ENCODE measurements at regions of chr5 and their contacts with region 1.

Region 1: GRCh38 chr5:36875790-36876388 is 680 bp upstream of the NIPBL start:
- DNase-seq: no peak
- ATAC-seq: peak; percentile 69
- H3K4me3 ChIP-seq: peak overlapping the region; percentile 84 to 96
- H3K27ac ChIP-seq: peak overlapping the region; percentile 97
- H3K4me1 ChIP-seq: peaks cover 28% of the 10 kb centered on the region
- H3K27me3 ChIP-seq: no peaks in the 10 kb centered on the region
- CTCF ChIP-seq: peak; percentile 72

Region 2: DNA sequence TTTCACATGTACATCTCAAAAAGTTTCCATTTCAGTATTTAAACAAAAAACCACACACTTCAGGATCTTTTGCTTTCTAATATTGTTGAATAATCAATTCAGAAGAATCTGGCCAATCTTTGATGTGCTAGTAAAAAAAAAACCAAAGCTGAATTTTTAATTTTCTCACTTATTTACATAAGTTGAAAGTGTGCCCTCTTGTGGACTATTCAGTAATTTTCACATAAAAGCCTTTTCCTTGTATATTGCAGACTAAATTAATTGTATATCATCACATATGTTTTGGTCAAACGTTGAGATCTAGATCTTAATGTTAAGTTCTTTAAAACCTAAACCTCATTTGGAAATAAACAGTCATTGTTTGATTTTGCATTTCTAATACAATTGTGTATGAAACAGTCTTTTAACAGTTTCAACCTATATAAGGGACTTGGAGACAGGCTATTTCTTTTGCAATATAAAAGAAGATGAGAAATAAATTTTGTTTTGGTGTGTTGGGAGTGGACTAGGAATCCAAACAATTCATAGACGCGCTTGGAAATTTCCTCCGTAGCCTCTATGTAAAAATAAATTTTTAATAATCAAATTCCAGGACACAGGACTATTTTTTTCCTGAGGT is 68.8 kb after region 1 on chr5:
- CTCF ChIA-PET with region 1: no interaction called
- POLR2A ChIA-PET with region 1: interaction called, 5 read pairs
- in situ Hi-C with region 1: no loop called
- intact Hi-C with region 1: loop called (anchors 5 kb)
- DNase-seq: peak; percentile 41
- ATAC-seq: no peak
- H3K4me3 ChIP-seq: no peak overlapping the region
- H3K27ac ChIP-seq: no peak overlapping the region
- H3K4me1 ChIP-seq: peaks cover 19% of the 10 kb centered on the region
- H3K27me3 ChIP-seq: no peaks in the 10 kb centered on the region
- CTCF ChIP-seq: peak; percentile 64; the same call in 1 of the 2 replicates

Region 3: GRCh38 chr5:36998578-36998977 is 122.7 kb after region 1 on chr5:
- CTCF ChIA-PET with region 1: no interaction called
- POLR2A ChIA-PET with region 1: no interaction called
- in situ Hi-C with region 1: no loop called
- intact Hi-C with region 1: loop called (anchors 10 kb)
- DNase-seq: no peak
- ATAC-seq: no peak
- H3K4me3 ChIP-seq: no peak overlapping the region
- H3K27ac ChIP-seq: no peak overlapping the region
- H3K4me1 ChIP-seq: peaks cover 9% of the 10 kb centered on the region; the same call in 1 of the 2 replicates
- H3K27me3 ChIP-seq: no peaks in the 10 kb centered on the region
- CTCF ChIP-seq: no peak